ENCODE measurements at regions of chrX and their contacts with region 1.

Region 1: GRCh38 chrX:100768679-100769338 is 36.9 kb upstream of the SYTL4 start:
- DNase-seq: peak; percentile 62
- CTCF ChIP-seq: peak; percentile 89

Region 2: DNA sequence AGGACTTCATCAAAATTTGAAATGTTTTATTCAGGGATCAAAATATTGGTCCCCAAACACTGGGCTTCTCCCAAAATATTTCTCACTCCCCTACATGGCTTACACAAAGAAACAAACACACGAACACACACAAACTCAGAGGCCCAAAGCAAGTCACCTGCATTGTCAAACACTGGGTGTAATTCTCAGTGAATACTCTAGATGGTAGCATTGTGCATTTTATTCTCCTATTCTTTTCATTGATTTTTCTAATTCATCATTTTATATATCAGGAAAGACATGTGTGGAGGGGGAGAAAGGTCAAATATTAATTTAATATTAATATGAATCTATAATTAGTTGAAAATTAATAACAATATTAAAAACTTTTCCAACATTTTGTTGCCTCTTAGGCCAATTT is 256.3 kb before region 1 on chrX:
- CTCF ChIA-PET with region 1: interaction called, 15 read pairs
- POLR2A ChIA-PET with region 1: no interaction called
- DNase-seq: peak; percentile 24
- CTCF ChIP-seq: peak; percentile 29

Region 3: GRCh38 chrX:100674705-100675104 is 94.1 kb before region 1 on chrX:
- CTCF ChIA-PET with region 1: interaction called, 28 read pairs
- POLR2A ChIA-PET with region 1: no interaction called
- DNase-seq: no peak
- CTCF ChIP-seq: no peak

Region 4: GRCh38 chrX:100685284-100685996 is 83.4 kb before region 1 on chrX:
- CTCF ChIA-PET with region 1: interaction called, 104 read pairs
- POLR2A ChIA-PET with region 1: no interaction called
- DNase-seq: peak; percentile 58
- CTCF ChIP-seq: peak; percentile 50

Region 5: GRCh38 chrX:100750883-100751282 is 17.9 kb before region 1 on chrX:
- CTCF ChIA-PET with region 1: interaction called, 13 read pairs
- POLR2A ChIA-PET with region 1: no interaction called
- DNase-seq: no peak
- CTCF ChIP-seq: no peak

Region 6: GRCh38 chrX:100829730-100830129 is 60.9 kb after region 1 on chrX:
- CTCF ChIA-PET with region 1: no interaction called
- POLR2A ChIA-PET with region 1: no interaction called
- DNase-seq: peak; percentile 19
- CTCF ChIP-seq: no peak

Measured in GM10248 (cell line).